ENCODE measurements at regions of chr17 and their contacts with region 1.

Region 1: DNA sequence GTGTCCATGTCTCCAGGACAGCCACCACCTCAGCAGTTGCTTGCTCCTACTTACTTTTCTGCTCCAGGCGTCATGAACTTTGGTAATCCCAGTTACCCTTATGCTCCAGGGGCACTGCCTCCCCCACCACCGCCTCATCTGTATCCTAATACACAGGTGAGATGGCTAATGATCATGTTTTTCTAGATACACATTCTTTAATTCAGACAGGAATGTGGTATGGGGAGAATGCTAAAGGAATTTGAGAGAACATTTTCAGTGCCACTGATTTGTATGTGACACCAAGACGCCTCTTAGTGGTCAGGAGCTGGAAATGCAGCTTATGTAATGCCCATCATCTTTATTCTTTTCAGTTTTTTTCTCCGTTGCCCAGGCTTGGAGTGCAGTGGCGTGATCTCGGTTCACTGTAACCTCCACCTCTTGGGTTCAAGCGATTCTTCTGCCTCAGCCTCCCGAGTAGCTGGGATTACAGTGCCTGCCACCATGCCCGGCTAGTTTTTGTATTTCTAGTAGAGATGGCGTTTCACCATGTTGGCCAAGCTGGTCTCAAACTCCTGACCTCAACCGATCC is 8.9 kb upstream of the RAPGEFL1 start:
- DNase-seq: peak in 1 of 2 donors; percentile 83
- ATAC-seq: peak; percentile 81 to 96 (median 83)
- H3K4me3 ChIP-seq: no peak overlapping the region
- H3K4me3 Mint-ChIP-seq: no peak overlapping the region
- H3K27ac ChIP-seq: no peak overlapping the region
- H3K27ac Mint-ChIP-seq: peak overlapping the region; percentile 74 to 90
- H3K4me1 ChIP-seq: no peaks in the 10 kb centered on the region
- H3K4me1 Mint-ChIP-seq: peaks cover 6 to 9% of the 10 kb centered on the region in 2 donors
- H3K27me3 ChIP-seq: no peaks in the 10 kb centered on the region
- H3K27me3 Mint-ChIP-seq: no peaks in the 10 kb centered on the region
- CTCF ChIP-seq: peak; percentile 75

Region 2: GRCh38 chr17:40062329-40063186 is 105.8 kb before region 1 on chr17 and contains the start of gene THRA:
- intact Hi-C with region 1: loop called (anchors 1 kb)
- DNase-seq: peak; percentile 69 to 86
- ATAC-seq: peak; percentile 93 to 96 (median 95)
- H3K4me3 ChIP-seq: peak within 1 kb of the TSS; percentile 79
- H3K4me3 Mint-ChIP-seq: peak within 1 kb of the TSS; percentile 92
- H3K27ac ChIP-seq: peak within 1 kb of the TSS; percentile 45
- H3K27ac Mint-ChIP-seq: peak within 1 kb of the TSS; percentile 69 to 81
- H3K4me1 ChIP-seq: peaks cover 44% of the 10 kb centered on the region
- H3K4me1 Mint-ChIP-seq: peaks cover 35 to 46% of the 10 kb centered on the region in 2 donors
- H3K27me3 ChIP-seq: no peaks in the 10 kb centered on the region
- H3K27me3 Mint-ChIP-seq: no peaks in the 10 kb centered on the region
- CTCF ChIP-seq: no peak
- total RNA-seq, gene THRA: 40.8 to 55.7 (median 42.3) TPM

Measured in natural killer cell (primary cell).